Psoas muscle (tissue), 8 donors: ENCODE measurements at regions of chr17 and their contacts with region 1.

Region 1: DNA sequence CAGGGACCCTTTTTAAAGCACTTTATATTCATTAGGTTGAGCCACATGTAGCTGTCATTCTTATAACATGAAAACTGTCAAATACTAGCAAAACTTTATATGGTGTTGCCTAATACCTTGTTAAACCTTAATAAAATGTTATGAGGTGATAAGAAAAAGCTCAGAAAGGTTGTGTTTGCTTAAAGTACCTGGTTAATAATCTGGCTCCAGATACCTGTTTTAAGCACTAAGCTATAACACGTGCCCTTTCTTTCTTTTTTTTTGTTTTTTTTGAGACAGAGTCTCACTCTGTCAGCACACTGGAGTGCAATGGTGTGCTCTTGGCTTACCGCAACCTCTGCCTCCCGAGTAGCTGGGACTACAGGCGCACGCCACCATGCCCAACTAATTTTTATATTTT is 58.9 kb upstream of the STAC2 start:
- DNase-seq: no peak
- ATAC-seq: no peak
- H3K4me3 ChIP-seq: no peak overlapping the region
- H3K27ac ChIP-seq: peak overlapping the region; percentile 78
- H3K4me1 ChIP-seq: peaks cover 38% of the 10 kb centered on the region
- H3K27me3 ChIP-seq: no peaks in the 10 kb centered on the region
- CTCF ChIP-seq: no peak

Region 2: GRCh38 chr17:39385040-39385439 is 100.4 kb after region 1 on chr17:
- intact Hi-C with region 1: loop called in 1 of 2 experiments (anchors 5 kb)
- DNase-seq: no peak
- ATAC-seq: no peak
- H3K4me3 ChIP-seq: no peak overlapping the region
- H3K27ac ChIP-seq: no peak overlapping the region
- H3K4me1 ChIP-seq: peaks cover 8% of the 10 kb centered on the region
- H3K27me3 ChIP-seq: no peaks in the 10 kb centered on the region
- CTCF ChIP-seq: no peak